Activated CD4-positive, alpha-beta T cell treated with anti-CD3 and anti-CD28 coated beads for 36 hours (primary cell): ENCODE measurements at regions of chr7 and their contacts with region 1.

Region 1: GRCh38 chr7:85890244-85890811 is 703.5 kb upstream of the SEMA3D start:
- DNase-seq: no peak
- ATAC-seq: no peak
- H3K4me3 Mint-ChIP-seq: no peak overlapping the region
- H3K27ac Mint-ChIP-seq: no peak overlapping the region
- H3K4me1 Mint-ChIP-seq: no peaks in the 10 kb centered on the region
- H3K27me3 Mint-ChIP-seq: no peaks in the 10 kb centered on the region

Region 2: DNA sequence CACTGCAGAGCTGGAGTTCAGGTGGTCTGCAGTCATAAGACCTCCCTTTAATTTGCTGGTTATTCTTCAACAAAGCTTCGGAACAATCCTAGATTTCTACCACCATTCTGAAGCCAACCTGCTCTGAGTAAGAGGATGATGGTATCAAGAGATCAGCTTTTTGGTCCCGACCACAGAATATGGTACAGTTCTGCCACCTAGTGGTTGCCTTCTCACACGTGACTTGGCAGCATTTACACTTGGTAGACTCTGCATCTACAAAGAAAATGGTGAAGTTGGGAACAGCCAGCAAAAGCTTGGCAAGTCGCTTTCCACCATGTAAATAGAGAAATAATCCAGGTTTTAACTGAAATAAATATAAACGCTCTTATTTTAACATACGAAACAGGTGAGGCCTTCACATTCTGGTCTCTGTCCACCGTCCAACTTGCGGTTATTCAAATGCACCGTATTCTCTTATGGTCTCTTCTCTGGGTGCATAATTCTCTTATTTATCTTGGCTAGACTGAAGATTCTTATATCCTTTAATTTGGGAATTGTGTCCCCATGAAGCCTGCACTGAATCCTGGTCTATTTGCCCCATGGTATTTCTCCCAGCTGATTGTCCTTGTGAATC is 579.5 kb after region 1 on chr7:
- CTCF ChIA-PET with region 1: interaction called, 13 read pairs
- POLR2A ChIA-PET with region 1: no interaction called
- intact Hi-C with region 1: loop called (anchors 1 kb)
- DNase-seq: peak; percentile 73
- ATAC-seq: peak; percentile 70
- H3K4me3 Mint-ChIP-seq: no peak overlapping the region
- H3K27ac Mint-ChIP-seq: no peak overlapping the region
- H3K4me1 Mint-ChIP-seq: no peaks in the 10 kb centered on the region
- H3K27me3 Mint-ChIP-seq: no peaks in the 10 kb centered on the region

Region 3: DNA sequence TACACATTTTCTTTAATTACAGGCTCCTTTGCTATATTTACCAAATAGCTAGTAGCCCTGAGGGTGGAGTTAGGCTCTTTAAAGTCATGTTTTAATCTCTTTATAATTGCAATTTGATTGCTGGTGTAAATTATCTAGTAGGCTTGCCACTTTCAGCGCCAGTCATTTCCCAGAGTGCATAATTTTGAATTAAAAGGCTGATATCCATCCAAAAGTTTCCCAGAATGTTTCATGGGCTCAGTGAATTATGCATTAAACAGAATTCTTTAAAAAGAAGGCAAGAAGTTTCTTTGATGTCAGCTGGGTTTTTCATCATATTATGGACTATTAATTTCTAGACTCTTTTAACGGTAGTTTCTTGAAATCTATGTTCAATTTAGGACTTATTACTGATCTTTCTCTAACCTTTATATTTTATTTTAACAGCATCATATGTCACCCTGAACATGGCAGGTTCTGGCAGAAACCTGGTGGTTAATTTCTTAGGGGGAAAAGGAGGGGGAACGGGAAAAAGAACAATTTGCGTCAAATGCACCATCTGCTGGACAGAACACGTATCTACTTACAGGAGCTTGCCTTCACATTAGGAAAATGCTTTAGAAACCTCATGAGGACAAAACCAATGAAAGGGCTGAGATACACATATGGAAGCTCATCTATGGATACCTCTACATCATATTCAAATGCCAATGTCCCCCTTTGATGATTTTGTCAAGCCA is 924.5 kb after region 1 on chr7:
- CTCF ChIA-PET with region 1: no interaction called
- POLR2A ChIA-PET with region 1: no interaction called
- intact Hi-C with region 1: loop called in 1 of 2 experiments (anchors 5 kb)
- DNase-seq: no peak
- ATAC-seq: no peak
- H3K4me3 Mint-ChIP-seq: no peak overlapping the region
- H3K27ac Mint-ChIP-seq: no peak overlapping the region
- H3K4me1 Mint-ChIP-seq: no peaks in the 10 kb centered on the region
- H3K27me3 Mint-ChIP-seq: peaks cover 1% of the 10 kb centered on the region

Region 4: DNA sequence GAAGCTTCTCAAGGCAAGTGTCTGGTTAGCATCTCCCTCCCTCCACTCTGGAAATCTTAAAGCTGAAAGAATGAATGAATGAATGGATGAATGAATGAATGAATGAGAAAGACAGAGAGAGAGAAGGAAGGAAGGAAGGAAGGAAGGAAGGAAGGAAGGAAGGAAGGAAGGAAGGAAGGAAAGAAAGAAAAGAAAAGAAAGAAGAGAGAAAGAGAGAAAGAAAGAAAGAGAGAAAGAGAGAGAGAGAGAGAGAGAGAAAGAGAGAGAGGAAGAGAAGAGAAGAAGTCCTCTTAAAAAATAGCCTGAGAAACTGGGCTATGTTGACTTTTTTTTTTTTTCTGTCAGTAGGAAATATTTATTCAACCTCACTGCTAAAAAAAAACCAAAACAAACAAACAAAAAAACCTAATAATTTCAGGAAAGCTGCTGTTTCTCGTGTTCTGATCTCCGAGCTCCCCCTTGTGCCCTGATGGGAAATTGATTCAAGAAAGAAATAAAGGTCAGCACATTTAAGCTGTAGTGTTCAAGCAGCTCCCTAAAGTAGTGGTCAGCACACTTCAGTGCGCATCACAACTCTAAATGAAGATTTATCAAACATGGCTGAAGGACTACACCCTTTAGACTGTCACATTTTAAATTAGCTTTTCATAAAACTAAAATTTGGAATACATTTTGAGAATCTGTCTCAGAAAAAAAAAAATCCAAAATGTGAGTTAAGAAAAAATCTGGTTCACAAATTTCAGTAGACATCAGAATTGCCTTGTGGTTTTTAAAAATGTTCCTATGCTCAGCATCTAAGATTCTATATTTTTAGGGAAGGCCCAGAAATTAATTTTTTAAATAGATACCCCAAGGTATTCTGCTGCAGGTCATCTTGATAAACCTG is 1014.9 kb after region 1 on chr7:
- CTCF ChIA-PET with region 1: no interaction called
- POLR2A ChIA-PET with region 1: no interaction called
- intact Hi-C with region 1: loop called (anchors 2 to 5 kb)
- DNase-seq: peak; percentile 23
- ATAC-seq: no peak
- H3K4me3 Mint-ChIP-seq: no peak overlapping the region
- H3K27ac Mint-ChIP-seq: no peak overlapping the region
- H3K4me1 Mint-ChIP-seq: no peaks in the 10 kb centered on the region
- H3K27me3 Mint-ChIP-seq: no peaks in the 10 kb centered on the region